ENCODE measurements at regions of chr16 and their contacts with region 1.

Region 1: DNA sequence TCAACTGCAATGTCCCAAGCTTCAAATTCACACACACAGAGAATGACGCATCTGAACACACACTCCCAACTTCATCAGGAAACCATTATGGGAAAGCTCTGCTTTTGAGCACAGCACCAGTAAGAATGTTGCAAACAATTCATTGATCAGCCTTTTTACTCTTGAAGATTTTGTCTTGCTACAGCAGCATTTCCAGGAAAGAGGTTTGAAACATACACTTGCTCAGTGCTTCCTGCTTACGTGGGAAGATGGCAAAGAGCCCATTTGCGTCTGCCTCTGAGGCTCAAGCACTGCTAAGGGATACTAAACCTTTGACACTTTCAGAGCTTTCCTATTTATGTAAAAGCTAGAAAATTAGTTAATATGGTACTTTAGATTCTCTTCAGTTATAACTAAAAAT is 77.2 kb upstream of the MON1B start:
- DNase-seq: no peak
- ATAC-seq: no peak
- H3K4me3 ChIP-seq: no peak overlapping the region
- H3K27ac ChIP-seq: no peak overlapping the region
- H3K4me1 ChIP-seq: no peaks in the 10 kb centered on the region
- H3K27me3 ChIP-seq: no peaks in the 10 kb centered on the region
- CTCF ChIP-seq: no peak
- POLR2A ChIP-seq: no peak

Region 2: GRCh38 chr16:77009453-77009852 is 104.4 kb before region 1 on chr16:
- in situ Hi-C with region 1: loop called in 1 of 4 experiments (anchors 25 kb)
- intact Hi-C with region 1: no loop called
- DNase-seq: no peak
- ATAC-seq: no peak
- H3K4me3 ChIP-seq: no peak overlapping the region
- H3K27ac ChIP-seq: no peak overlapping the region
- H3K4me1 ChIP-seq: no peaks in the 10 kb centered on the region
- H3K27me3 ChIP-seq: no peaks in the 10 kb centered on the region
- CTCF ChIP-seq: no peak
- POLR2A ChIP-seq: no peak

Region 3: GRCh38 chr16:77157346-77158058 is 43.7 kb after region 1 on chr16:
- in situ Hi-C with region 1: no loop called
- intact Hi-C with region 1: no loop called
- DNase-seq: no peak
- ATAC-seq: no peak
- H3K4me3 ChIP-seq: no peak overlapping the region
- H3K27ac ChIP-seq: no peak overlapping the region
- H3K4me1 ChIP-seq: no peaks in the 10 kb centered on the region
- H3K27me3 ChIP-seq: peaks cover 0 to 3% (median 0%) of the 10 kb centered on the region in 3 donors
- CTCF ChIP-seq: no peak
- POLR2A ChIP-seq: no peak